GM13977 (cell line): ENCODE measurements at regions of chr7 and their contacts with region 1.

Region 1: DNA sequence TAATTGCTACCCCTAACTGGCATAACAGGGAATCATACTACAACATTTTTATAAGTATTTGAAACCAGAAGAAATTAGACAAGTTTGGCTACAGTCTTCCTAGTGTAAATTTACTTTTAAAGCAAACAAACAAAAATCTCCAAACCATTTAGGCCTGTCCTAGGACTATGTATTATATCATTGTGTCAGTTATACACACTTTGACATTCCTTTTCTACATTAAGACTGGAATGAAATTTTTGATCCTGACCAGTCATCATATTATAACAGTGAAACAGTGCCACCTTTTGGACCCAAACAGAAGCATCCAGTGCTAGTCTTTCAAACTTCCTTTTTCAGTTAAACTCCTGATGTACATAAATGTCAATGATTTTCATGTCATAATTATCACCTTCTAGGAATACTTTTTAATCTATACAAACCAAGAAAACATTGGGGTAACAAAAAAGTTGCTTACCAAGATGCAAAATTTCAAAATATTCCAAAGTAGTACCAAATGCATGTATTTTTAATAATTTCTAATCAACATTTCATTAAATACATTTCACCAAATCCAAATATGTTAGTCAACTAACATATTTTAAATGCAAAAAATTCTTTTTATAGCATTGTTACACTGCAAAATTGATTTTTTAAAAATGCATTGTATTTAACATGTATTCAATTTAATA is 75.7 kb downstream of the IMMP2L start:
- DNase-seq: peak; percentile 50
- CTCF ChIP-seq: peak; percentile 68

Region 2: GRCh38 chr7:111098011-111098925 is 388.3 kb before region 1 on chr7:
- in situ Hi-C with region 1: loop called (anchors 25 kb)
- DNase-seq: no peak
- CTCF ChIP-seq: peak; percentile 65